ENCODE measurements at regions of chr22 and their contacts with region 1.

Region 1: DNA sequence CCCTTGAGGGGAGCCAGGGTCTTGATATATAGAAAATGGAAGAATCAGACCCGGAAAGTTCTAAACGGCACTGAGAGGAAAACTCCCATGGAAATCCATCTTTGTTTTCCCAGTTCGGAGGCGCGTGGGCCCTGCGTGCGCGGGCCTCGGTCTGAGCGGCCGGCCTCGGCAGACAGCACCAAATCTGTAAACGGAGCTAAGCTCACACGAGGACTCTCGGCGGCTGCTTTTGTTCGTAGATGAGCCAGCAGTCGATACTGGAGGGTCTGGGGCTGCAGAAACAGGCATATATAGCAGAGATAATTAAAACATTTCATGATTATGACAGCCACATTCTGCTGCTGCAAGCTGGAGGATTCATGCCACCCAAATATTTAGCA is 68.5 kb upstream of the PPARA start:
- DNase-seq: peak; percentile 27 to 51
- ATAC-seq: no peak
- H3K4me3 ChIP-seq: peak overlapping the region; percentile 95
- H3K27ac ChIP-seq: peak overlapping the region; percentile 98
- H3K4me1 ChIP-seq: peaks cover 79% of the 10 kb centered on the region
- H3K27me3 ChIP-seq: no peaks in the 10 kb centered on the region
- CTCF ChIP-seq: no peak

Region 2: GRCh38 chr22:46071451-46072109 is 10.2 kb before region 1 on chr22:
- intact Hi-C with region 1: loop called in 1 of 2 experiments (anchors 2 kb)
- DNase-seq: peak; percentile 93 to 97
- ATAC-seq: peak; percentile 30 to 48 (median 36)
- H3K4me3 ChIP-seq: peak overlapping the region; percentile 95
- H3K27ac ChIP-seq: peak overlapping the region; percentile 98
- H3K4me1 ChIP-seq: peaks cover 25% of the 10 kb centered on the region
- H3K27me3 ChIP-seq: no peaks in the 10 kb centered on the region
- CTCF ChIP-seq: no peak

Measured in psoas muscle (tissue), 8 donors.